ENCODE measurements at regions of chr1 and their contacts with region 1.

Region 1: GRCh38 chr1:231636157-231636556 is 9.6 kb downstream of the DISC1 start:
- DNase-seq: no peak
- H3K4me3 ChIP-seq: no peak overlapping the region
- H3K27me3 ChIP-seq: no peaks in the 10 kb centered on the region
- CTCF ChIP-seq: no peak

Region 2: GRCh38 chr1:231663211-231663792 is 27.1 kb after region 1 on chr1:
- CTCF ChIA-PET with region 1: no interaction called
- POLR2A ChIA-PET with region 1: interaction called, 11 read pairs
- DNase-seq: no peak
- H3K4me3 ChIP-seq: no peak overlapping the region
- H3K27me3 ChIP-seq: no peaks in the 10 kb centered on the region
- CTCF ChIP-seq: no peak

Measured in BJ (cell line).